ENCODE measurements at regions of chr20 and their contacts with region 1.

Region 1: DNA sequence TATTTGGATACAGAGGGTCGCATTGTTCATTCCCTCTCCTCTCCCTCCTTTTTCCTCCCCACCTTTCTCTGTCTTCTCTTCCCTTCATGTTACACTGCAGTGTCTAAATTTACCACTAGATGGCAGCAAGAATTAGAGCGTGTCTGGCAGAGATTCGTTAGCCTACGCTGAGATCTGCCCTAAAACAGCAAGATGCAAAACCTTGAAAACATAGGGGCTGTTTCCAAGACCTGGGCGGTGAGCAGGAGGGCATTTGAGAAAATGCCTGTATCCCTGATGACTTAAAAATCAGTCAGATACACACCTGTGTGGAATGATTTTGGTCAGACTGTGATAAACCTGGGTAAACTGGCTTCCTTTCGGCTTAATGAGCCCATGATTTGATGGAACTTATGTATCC is 101.5 kb upstream of the ISM1 start:
- DNase-seq: peak in 1 of 5 donors; percentile 41
- H3K4me3 ChIP-seq: no peak overlapping the region
- H3K27ac ChIP-seq: no peak overlapping the region
- H3K4me1 ChIP-seq: no peaks in the 10 kb centered on the region
- H3K27me3 ChIP-seq: no peaks in the 10 kb centered on the region
- CTCF ChIP-seq: peak; percentile 68 to 80 (median 72)
- EP300 ChIP-seq: no peak
- POLR2A ChIP-seq: no peak

Region 2: GRCh38 chr20:13749811-13750210 is 630.2 kb after region 1 on chr20:
- intact Hi-C with region 1: no loop called
- DNase-seq: no peak
- H3K4me3 ChIP-seq: no peak overlapping the region
- H3K27ac ChIP-seq: no peak overlapping the region
- H3K4me1 ChIP-seq: no peaks in the 10 kb centered on the region
- H3K27me3 ChIP-seq: no peaks in the 10 kb centered on the region
- CTCF ChIP-seq: no peak
- EP300 ChIP-seq: no peak
- POLR2A ChIP-seq: no peak

Region 3: DNA sequence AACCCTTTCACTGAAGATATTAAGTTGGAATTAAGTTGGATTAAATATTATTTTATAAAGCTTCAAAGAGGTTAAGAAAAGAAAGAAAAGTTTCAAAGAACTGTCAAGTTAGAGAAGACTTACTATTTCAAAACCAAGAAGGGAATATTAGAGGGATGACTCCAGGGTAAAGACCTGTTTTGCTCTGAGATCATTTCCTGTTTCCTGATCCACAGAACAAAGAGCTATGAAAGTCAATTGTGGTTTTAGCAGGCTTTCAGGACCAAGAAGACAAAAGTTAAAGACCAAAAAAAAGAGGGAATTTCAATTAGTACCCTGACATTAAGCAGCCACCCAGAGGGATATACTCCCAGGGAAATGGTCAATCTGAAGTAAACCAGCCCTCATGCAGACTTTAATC is 645.7 kb after region 1 on chr20:
- intact Hi-C with region 1: loop called in 3 of 4 experiments (anchors 10 kb)
- DNase-seq: no peak
- H3K4me3 ChIP-seq: no peak overlapping the region
- H3K27ac ChIP-seq: no peak overlapping the region
- H3K4me1 ChIP-seq: no peaks in the 10 kb centered on the region
- H3K27me3 ChIP-seq: no peaks in the 10 kb centered on the region
- CTCF ChIP-seq: no peak
- EP300 ChIP-seq: no peak
- POLR2A ChIP-seq: no peak

Region 4: DNA sequence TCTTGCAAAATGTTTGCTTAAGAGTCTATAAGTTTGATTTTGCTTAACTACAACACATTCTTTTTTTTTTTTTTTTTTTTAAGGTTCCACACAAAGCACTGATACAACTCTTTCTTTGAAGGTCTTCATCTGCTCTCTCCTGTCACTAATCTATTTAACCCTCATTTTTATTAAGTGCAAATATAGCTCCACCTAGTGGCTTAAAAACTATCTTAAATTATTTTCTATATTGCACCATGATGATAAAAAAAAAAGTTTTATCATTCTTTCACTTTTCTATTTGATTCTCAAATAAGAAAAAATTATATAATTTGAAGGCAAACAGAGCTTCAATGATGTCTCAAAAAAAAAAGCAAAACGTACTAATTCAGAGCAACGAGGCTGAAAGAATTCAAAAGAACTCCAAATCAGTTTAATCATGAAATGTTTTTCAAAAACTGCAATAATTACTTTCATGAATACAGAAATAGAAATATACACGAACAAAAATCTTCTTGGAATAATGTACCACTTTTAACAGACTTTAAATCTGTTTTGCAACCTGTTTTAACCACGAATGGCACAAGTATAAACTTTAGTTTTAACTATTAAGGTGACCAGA is 652.4 kb after region 1 on chr20:
- intact Hi-C with region 1: loop called in 3 of 4 experiments (anchors 10 kb)
- DNase-seq: no peak
- H3K4me3 ChIP-seq: no peak overlapping the region
- H3K27ac ChIP-seq: no peak overlapping the region
- H3K4me1 ChIP-seq: no peaks in the 10 kb centered on the region
- H3K27me3 ChIP-seq: no peaks in the 10 kb centered on the region
- CTCF ChIP-seq: peak in 1 of 3 donors; percentile 30
- EP300 ChIP-seq: no peak
- POLR2A ChIP-seq: no peak

Measured in ovary (tissue), 10 donors.